AG04450 (cell line): ENCODE measurements at regions of chr5 and their contacts with region 1.

Region 1: DNA sequence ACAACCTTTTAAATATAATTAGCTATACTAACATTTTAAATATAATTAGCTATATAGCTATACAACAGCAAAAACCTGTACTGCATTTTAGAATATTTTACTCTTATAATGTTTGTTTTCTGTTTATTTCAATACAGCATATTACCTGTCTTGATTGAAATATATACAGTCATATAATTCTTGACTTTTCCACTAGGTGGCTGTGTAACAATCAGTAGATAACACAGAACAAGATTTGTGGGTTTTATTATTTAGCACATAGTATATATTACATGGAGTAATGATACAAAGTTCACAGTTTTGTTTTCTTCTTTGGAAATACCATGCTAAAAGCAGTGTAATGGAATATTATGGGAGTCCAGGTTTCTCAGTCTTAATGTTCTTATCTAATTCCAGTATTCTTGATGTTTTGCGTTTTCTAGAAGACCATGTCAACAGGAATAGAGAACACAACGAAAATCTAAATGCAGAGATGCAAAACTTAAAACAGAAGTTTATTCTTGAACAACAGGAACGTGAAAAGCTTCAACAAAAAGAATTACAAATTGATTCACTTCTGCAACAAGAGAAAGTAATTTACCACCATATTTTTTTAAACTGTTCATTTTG is 13.3 kb downstream of the HMMR start:
- DNase-seq: no peak
- H3K4me3 ChIP-seq: no peak overlapping the region
- H3K27ac ChIP-seq: no peak overlapping the region
- H3K27me3 ChIP-seq: no peaks in the 10 kb centered on the region
- CTCF ChIP-seq: peak; percentile 43

Region 2: GRCh38 chr5:163424836-163425235 is 48.9 kb before region 1 on chr5:
- CTCF ChIA-PET with region 1: no interaction called
- POLR2A ChIA-PET with region 1: no interaction called
- DNase-seq: no peak
- H3K4me3 ChIP-seq: no peak overlapping the region
- H3K27ac ChIP-seq: no peak overlapping the region
- H3K27me3 ChIP-seq: no peaks in the 10 kb centered on the region
- CTCF ChIP-seq: no peak

Region 3: DNA sequence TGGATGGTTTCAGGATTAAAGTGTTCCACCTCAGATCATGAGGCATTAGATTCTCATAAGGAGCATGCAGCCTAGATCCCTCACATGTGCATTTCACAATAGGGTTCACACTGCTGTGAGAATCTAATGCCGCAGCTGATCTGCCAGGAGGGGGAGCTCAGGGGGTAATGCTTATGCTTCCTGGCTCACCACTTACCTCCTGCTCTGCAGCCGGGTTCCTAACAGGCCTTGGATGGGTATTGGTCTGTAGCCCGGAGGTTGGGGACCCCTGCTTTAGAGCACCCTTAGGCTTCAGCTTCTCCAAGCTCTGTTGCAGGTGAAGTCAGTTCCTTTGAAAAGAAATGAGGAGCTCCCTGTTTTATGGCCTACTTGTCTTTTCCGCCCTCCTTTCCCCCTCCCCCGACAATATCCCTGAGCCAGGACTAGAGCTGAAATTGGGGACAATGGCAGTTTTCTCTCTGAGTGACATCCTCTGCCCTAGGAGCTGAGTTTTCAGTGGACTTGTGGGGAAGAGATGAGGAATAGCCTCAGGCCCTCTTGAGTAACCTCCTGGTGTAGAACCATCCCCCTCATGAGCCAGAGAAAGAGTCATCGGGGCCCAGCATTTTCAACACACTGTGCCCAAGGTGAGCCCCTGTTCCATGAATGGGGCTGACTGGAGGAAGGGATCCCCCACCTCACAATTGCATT is 15.5 kb after region 1 on chr5:
- CTCF ChIA-PET with region 1: interaction called, 10 read pairs
- POLR2A ChIA-PET with region 1: no interaction called
- DNase-seq: no peak
- H3K4me3 ChIP-seq: no peak overlapping the region
- H3K27ac ChIP-seq: no peak overlapping the region
- H3K27me3 ChIP-seq: no peaks in the 10 kb centered on the region
- CTCF ChIP-seq: peak; percentile 42

Region 4: DNA sequence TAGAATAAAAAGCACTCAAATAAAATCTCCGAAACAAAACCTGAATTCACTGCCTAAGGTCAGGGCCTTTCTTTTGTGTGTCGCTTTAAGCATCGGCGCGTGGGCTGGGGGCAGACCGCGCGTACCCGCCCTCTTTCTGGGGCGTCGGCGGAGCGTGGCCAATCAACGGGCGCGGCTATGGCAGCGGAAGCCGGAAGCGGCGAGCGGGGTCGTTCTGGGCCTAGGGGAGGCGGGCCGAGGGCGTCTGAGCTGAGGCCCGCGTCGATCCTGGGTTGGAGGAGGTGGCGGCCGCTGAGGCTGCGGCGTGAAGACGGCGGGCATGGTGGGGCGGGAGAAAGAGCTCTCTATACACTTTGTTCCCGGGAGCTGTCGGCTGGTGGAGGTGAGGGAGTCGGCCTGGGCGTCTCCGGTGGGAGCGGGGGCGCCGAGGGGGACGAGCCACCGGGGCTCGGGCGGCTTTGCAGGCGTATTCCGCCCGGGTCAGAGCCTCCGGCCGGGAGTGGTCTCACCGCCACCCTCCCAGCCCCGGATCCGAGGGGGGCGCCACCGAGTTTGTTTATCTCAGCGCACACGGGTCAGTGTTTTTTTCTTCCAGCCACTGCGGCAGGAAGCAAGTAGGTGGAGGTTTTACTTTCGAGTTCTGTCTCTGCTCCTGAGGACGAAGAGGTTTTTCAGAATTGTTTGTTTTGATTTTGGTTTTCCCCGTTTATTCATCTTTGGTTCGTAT is 31.8 kb after region 1 on chr5 and contains the start of gene MAT2B:
- CTCF ChIA-PET with region 1: interaction called, 27 read pairs
- POLR2A ChIA-PET with region 1: no interaction called
- DNase-seq: peak; percentile 78
- H3K4me3 ChIP-seq: peak within 1 kb of the TSS; percentile 88
- H3K27ac ChIP-seq: peak within 1 kb of the TSS; percentile 96
- H3K27me3 ChIP-seq: no peaks in the 10 kb centered on the region
- CTCF ChIP-seq: peak; percentile 41; the same call in 1 of the 2 replicates
- polyA plus RNA-seq, gene MAT2B: 59.5 and 86.4 TPM in 2 replicates